AG04449 (cell line): ENCODE measurements at regions of chr6 and their contacts with region 1.

Region 1: DNA sequence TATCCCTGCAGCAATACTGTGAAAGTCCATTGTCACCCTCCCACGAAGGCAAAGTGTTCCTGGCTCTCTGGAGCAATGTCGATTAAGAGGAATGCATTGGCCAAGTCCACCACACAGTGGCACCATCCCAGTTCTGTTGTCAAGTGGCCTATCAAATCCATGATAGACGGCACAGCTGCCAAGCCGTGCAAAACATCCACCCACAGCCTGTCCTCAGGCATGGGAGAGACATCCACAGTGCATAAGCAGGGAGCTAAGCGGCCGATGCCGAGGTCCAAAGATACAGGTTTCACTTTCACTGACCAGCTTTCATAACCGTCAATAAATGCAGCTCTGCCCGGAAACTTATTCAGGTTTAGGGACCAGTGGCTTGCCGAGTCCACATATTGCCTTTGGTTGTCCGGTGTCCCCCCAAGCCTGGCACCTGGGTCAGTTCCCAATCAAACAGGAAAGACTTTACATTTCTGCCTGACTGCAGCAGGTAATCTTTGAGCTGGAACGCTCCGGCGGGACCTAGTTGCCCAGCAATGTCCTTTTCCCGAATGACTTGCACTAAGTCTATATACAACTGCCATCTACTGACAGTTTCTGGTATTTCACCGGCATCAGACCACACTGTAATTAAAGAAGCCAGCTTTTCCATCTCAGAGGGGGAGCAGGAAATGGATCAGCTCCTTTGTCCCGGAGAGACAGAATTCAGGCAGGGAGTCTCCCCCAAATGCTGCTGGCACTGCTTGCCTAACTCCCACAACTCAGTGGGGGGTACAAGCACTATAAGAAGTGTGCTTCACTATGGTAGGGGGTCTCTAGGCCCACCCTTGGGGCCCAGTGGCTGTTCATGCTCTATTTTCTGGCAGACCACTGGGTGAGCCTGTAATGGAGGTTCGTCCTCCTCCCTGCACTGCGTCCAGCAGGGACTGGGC is 6.3 kb downstream of the ZKSCAN3 start:
- DNase-seq: peak; percentile 42
- H3K4me3 ChIP-seq: peak overlapping the region; percentile 74
- CTCF ChIP-seq: peak; percentile 60

Region 2: GRCh38 chr6:28218271-28219248 is 137.4 kb before region 1 on chr6:
- CTCF ChIA-PET with region 1: interaction called, 12 read pairs
- POLR2A ChIA-PET with region 1: no interaction called
- DNase-seq: no peak
- H3K4me3 ChIP-seq: peak overlapping the region; percentile 59
- CTCF ChIP-seq: no peak

Region 3: DNA sequence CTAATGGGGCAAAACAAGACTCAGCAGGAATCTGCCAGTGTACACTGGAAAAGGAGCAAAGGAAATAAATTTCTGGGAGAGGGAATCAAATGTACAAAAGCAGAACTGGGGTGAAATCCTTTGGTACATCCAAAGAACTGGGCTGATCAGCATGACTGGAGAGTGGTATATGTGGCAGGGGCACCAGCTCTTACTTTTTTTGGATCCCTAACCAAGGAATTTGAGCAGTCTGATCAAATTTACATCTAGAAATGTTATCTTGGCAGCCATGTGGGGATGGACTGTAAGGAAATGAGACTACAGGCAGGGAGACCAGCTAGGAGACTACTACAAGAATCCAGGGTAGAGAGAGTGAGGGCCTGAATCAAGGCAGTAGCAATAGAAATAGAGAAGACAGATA is 18.9 kb before region 1 on chr6:
- CTCF ChIA-PET with region 1: interaction called, 12 read pairs
- POLR2A ChIA-PET with region 1: interaction called, 5 read pairs
- DNase-seq: no peak
- H3K4me3 ChIP-seq: no peak overlapping the region
- CTCF ChIP-seq: no peak

Region 4: GRCh38 chr6:28377879-28378278 is 21.9 kb after region 1 on chr6:
- CTCF ChIA-PET with region 1: interaction called, 29 read pairs
- POLR2A ChIA-PET with region 1: no interaction called
- DNase-seq: no peak
- H3K4me3 ChIP-seq: no peak overlapping the region
- CTCF ChIP-seq: no peak

Region 5: GRCh38 chr6:28393911-28394662 is 38.1 kb after region 1 on chr6:
- CTCF ChIA-PET with region 1: interaction called, 10 read pairs
- POLR2A ChIA-PET with region 1: no interaction called
- DNase-seq: no peak
- H3K4me3 ChIP-seq: no peak overlapping the region
- CTCF ChIP-seq: peak; percentile 8

Region 6: DNA sequence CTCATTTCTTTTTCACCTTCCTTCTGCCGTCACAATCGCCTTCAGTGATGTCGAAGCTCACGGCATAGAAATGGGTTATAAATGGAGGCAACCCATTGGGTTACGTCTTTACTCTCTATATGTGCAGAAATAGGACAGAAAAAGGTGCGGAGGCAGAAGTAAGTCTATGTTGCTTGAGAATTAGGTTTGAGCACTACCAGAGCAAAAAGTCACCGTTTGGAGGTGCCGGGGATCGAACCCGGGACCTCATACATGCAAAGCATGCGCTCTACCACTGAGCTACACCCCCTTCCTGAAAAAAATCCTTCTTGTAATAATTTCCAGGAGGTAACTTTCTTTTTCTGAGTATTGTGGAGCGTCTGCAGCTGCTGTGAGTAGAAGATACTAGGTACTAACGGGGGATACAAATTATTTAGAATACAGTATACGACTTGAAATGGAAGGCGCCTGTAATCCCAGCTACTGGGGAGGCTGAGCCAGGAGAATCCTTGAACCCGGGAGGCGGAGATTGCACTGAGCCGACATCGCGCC is 433.6 kb after region 1 on chr6:
- CTCF ChIA-PET with region 1: no interaction called
- POLR2A ChIA-PET with region 1: no interaction called
- DNase-seq: no peak
- H3K4me3 ChIP-seq: peak overlapping the region; percentile 65
- CTCF ChIP-seq: no peak